Breast epithelium (tissue), 4 donors: ENCODE measurements at regions of chr18 and their contacts with region 1.

Region 1: DNA sequence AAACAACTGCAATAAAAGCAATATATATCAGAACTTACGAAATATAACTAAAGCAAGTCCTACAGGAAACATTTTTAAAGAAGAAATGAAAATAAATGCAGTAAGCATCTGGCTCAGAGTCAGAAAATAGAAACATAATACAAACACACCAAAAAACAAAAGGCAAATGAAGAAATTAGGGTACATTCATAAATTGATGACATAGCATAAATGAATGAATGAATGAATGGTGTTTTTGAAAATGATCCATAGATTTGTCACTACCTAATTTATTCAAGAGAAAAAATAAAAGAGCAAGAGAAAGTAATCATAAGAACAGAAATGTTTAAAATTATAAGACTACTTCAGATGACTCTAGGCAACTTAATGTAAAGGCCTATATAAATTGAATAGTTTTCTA is 226.1 kb upstream of the CDH20 start:
- DNase-seq: no peak
- H3K4me3 ChIP-seq: no peak overlapping the region
- H3K27ac ChIP-seq: no peak overlapping the region
- H3K4me1 ChIP-seq: no peaks in the 10 kb centered on the region
- H3K27me3 ChIP-seq: no peaks in the 10 kb centered on the region
- CTCF ChIP-seq: no peak
- POLR2A ChIP-seq: no peak

Region 2: GRCh38 chr18:61085761-61086160 is 21.3 kb before region 1 on chr18:
- intact Hi-C with region 1: no loop called
- DNase-seq: no peak
- H3K4me3 ChIP-seq: no peak overlapping the region
- H3K27ac ChIP-seq: no peak overlapping the region
- H3K4me1 ChIP-seq: no peaks in the 10 kb centered on the region
- H3K27me3 ChIP-seq: no peaks in the 10 kb centered on the region
- CTCF ChIP-seq: no peak
- POLR2A ChIP-seq: no peak

Region 3: GRCh38 chr18:61141691-61142090 is 34.6 kb after region 1 on chr18:
- intact Hi-C with region 1: loop called (anchors 2 kb)
- DNase-seq: no peak
- H3K4me3 ChIP-seq: no peak overlapping the region
- H3K27ac ChIP-seq: no peak overlapping the region
- H3K4me1 ChIP-seq: no peaks in the 10 kb centered on the region
- H3K27me3 ChIP-seq: no peaks in the 10 kb centered on the region
- CTCF ChIP-seq: no peak
- POLR2A ChIP-seq: no peak